A549 (cell line): ENCODE measurements at regions of chr17 and their contacts with region 1.

Region 1: GRCh38 chr17:51153210-51154072 is at the start of gene NME1:
- DNase-seq: peak; percentile 99 to 100
- ATAC-seq: peak; percentile 96 to 98
- H3K4me3 ChIP-seq: peak within 1 kb of the TSS; percentile 74
- H3K27ac ChIP-seq: peak within 1 kb of the TSS; percentile 82 to 88
- H3K4me1 ChIP-seq: peaks cover 25% of the 10 kb centered on the region
- CTCF ChIP-seq: peak; percentile 98
- EP300 ChIP-seq: no peak
- POLR2A ChIP-seq: peak; percentile 77
- RAD21 ChIP-seq: peak; percentile 99
- polyA plus RNA-seq, gene NME1: 639 and 782 TPM in 2 replicates

Region 2: DNA sequence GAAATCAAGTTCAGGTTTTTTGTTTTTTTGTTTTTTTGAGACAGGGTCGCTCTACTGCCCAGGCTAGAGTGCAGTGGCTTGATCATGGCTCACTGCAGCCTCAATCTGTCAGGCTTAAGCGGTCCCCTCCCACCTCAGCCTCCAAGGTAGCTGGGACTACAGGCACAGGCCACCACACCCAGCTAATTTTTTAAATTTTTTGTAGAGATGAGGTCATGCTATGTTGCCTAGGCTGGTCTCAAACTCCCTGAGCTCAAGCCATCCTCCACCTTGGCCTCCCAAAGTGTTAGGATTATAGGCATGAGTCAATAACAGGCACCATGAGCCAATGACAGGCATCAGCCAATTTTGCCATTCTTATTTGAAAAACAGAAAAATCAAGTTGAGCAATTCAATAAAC is 157.8 kb before region 1 on chr17:
- CTCF ChIA-PET with region 1: interaction called, 202 read pairs
- POLR2A ChIA-PET with region 1: interaction called, 7 read pairs
- DNase-seq: no peak
- ATAC-seq: peak in 1 of 2 experiments; percentile 41; a peak in 2 of 6 replicates
- H3K4me3 ChIP-seq: no peak overlapping the region
- H3K27ac ChIP-seq: no peak overlapping the region
- H3K4me1 ChIP-seq: no peaks in the 10 kb centered on the region
- CTCF ChIP-seq: no peak
- EP300 ChIP-seq: no peak
- POLR2A ChIP-seq: no peak
- RAD21 ChIP-seq: no peak

Region 3: DNA sequence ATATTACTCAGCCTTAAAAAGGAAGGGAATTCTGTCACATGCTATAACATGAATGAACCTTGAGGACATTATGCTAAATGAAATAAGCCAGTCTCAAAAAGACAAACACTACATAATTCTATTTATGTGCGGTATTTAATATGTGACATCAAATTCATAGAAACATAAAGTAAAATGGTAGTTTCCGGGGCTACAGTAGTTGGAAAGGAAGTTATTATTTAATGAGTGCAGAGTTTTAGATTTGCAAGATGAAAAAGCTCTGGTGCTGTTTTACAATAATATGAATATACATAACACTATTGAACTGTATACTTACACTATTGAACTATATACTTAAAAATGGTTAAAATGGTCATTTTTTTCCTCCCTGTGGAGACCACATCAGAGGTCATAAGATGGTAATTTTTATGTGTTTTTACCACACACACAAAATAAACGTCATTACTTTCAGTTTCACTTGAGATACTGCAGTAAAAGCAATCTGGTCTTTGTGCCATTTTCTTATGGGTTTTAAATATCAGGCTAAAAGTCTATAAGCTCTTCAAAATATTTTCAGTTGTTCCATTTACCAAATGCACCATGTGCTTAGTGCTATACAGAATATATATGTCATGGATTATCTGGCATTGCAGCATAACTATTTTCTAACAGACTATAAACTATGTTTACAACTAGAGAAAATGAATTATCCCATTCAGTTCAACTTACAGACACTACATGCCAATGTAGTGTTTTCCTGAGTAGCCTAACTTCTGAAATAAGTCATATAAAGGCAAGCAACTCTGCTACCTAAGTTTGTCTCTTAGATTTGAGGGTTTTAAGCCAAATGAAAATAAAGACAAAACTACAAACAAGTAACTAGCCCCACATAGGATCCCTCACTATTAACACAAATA is 123.6 kb before region 1 on chr17:
- CTCF ChIA-PET with region 1: interaction called, 17 read pairs
- POLR2A ChIA-PET with region 1: no interaction called
- DNase-seq: no peak
- ATAC-seq: no peak
- H3K4me3 ChIP-seq: no peak overlapping the region
- H3K27ac ChIP-seq: no peak overlapping the region
- H3K4me1 ChIP-seq: peaks cover 8% of the 10 kb centered on the region; the same call in 2 of the 3 replicates
- CTCF ChIP-seq: no peak
- EP300 ChIP-seq: no peak
- POLR2A ChIP-seq: no peak
- RAD21 ChIP-seq: no peak

Region 4: DNA sequence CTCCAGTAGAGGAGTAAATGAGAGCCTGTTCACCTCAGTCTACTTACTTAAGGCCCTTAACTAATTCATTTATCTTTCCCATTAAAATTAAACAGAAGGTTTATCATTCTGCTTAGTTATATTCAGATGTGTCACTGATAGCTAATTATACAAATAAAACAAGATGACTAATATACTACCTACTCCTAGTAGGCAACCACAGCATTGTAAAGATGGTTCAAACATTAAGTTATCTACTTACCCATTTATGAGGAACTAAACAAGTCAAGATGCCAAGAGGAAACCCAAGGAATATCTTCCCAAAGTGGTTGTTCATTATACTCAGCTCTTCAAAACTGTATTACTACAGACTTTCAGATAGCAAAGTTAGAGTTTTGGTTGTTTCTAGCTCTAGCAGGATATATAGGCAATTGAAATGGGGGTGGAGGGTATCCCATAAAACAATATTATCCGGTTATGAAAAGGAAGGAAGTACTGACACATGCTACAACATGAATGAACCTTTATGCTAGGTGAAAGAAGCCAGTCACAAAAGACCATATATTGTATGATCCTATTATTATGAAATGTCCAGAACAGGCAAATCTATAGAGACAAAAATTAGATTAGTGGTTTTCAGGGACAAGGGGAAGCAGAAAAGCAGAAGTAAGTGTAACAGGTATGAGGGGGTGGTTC is 89.2 kb before region 1 on chr17:
- CTCF ChIA-PET with region 1: interaction called, 34 read pairs
- POLR2A ChIA-PET with region 1: no interaction called
- DNase-seq: no peak
- ATAC-seq: no peak
- H3K4me3 ChIP-seq: no peak overlapping the region
- H3K27ac ChIP-seq: no peak overlapping the region
- H3K4me1 ChIP-seq: peaks cover 14% of the 10 kb centered on the region
- CTCF ChIP-seq: no peak
- EP300 ChIP-seq: no peak
- POLR2A ChIP-seq: no peak
- RAD21 ChIP-seq: no peak

Region 5: DNA sequence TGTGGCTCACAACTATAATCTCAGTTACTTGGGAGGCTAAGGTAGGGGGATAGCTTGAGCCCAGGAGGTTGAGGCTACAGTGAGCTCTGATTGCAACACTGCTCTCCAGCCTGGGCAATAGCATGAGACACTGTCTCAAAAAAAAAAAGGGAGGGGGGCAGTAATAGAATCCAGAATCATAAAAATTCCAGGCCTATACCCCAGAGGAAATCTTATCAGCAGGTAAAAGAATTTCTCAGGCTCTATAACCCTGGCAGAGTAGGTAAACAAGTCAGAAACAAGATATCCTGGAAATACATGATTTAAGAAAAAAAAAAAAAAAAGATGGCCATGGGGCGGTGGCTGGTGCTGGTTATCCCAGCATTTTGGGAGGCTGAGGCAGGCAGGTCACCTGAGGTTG is 45.7 kb before region 1 on chr17:
- CTCF ChIA-PET with region 1: interaction called, 20 read pairs
- POLR2A ChIA-PET with region 1: interaction called, 3 read pairs
- DNase-seq: no peak
- ATAC-seq: no peak; a peak in 1 of 6 replicates
- H3K4me3 ChIP-seq: no peak overlapping the region
- H3K27ac ChIP-seq: no peak overlapping the region
- H3K4me1 ChIP-seq: peaks cover 41% of the 10 kb centered on the region
- CTCF ChIP-seq: no peak
- EP300 ChIP-seq: no peak
- POLR2A ChIP-seq: no peak
- RAD21 ChIP-seq: no peak

Region 6: GRCh38 chr17:51166197-51166986 is 13.0 kb after region 1 on chr17 and contains the start of gene NME2:
- CTCF ChIA-PET with region 1: interaction called, 51 read pairs
- POLR2A ChIA-PET with region 1: interaction called, 10 read pairs
- DNase-seq: peak; percentile 93 to 97
- ATAC-seq: peak; percentile 85 to 93
- H3K4me3 ChIP-seq: peak within 1 kb of the TSS; percentile 88
- H3K27ac ChIP-seq: peak within 1 kb of the TSS; percentile 94
- H3K4me1 ChIP-seq: peaks cover 21% of the 10 kb centered on the region
- CTCF ChIP-seq: no peak
- EP300 ChIP-seq: no peak
- POLR2A ChIP-seq: peak; percentile 74
- RAD21 ChIP-seq: no peak
- polyA plus RNA-seq, gene NME2: 1,425 and 1,432 TPM in 2 replicates

Region 7: DNA sequence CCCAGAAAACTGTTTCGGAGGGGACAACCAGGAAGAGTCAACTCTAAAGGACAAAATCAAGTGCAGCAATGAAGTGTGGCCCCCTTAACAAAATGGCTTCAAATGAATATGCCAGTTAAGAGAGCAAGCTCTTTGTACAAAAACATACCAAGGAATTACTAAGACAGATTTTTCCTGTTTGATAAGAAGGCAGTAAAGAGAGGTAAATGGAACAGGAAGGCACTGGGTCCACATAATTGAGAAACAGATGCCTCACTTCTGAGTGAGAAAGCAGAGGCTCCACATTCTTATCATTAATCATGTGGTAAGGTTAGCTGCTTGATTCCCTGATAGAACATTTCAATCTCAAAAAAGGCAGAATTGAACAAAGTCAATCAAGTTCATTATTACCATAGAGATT is 61.5 kb after region 1 on chr17:
- CTCF ChIA-PET with region 1: no interaction called
- POLR2A ChIA-PET with region 1: no interaction called
- DNase-seq: no peak
- ATAC-seq: no peak
- H3K4me3 ChIP-seq: no peak overlapping the region
- H3K27ac ChIP-seq: no peak overlapping the region
- H3K4me1 ChIP-seq: no peaks in the 10 kb centered on the region
- CTCF ChIP-seq: no peak
- EP300 ChIP-seq: no peak
- POLR2A ChIP-seq: no peak
- RAD21 ChIP-seq: no peak

Region 8: GRCh38 chr17:51263001-51263400 is 109.6 kb after region 1 on chr17:
- CTCF ChIA-PET with region 1: no interaction called
- POLR2A ChIA-PET with region 1: no interaction called
- DNase-seq: no peak
- ATAC-seq: no peak
- H3K4me3 ChIP-seq: no peak overlapping the region
- H3K27ac ChIP-seq: no peak overlapping the region
- H3K4me1 ChIP-seq: peaks cover 38% of the 10 kb centered on the region
- CTCF ChIP-seq: no peak
- EP300 ChIP-seq: no peak
- POLR2A ChIP-seq: no peak
- RAD21 ChIP-seq: no peak